ENCODE measurements at regions of chr6 and their contacts with region 1.

Region 1: GRCh38 chr6:34027445-34027936 is 118.4 kb downstream of the GRM4 start:
- DNase-seq: peak; percentile 82
- H3K4me3 Mint-ChIP-seq: no peak overlapping the region
- H3K27ac Mint-ChIP-seq: no peak overlapping the region
- H3K4me1 Mint-ChIP-seq: peaks cover under 1% of the 10 kb centered on the region
- H3K27me3 Mint-ChIP-seq: peaks cover 79% of the 10 kb centered on the region
- CTCF ChIP-seq: peak; percentile 97

Region 2: GRCh38 chr6:33851959-33852358 is 175.5 kb before region 1 on chr6:
- CTCF ChIA-PET with region 1: no interaction called
- intact Hi-C with region 1: loop called (anchors 5 kb)
- DNase-seq: peak; percentile 51
- H3K4me3 Mint-ChIP-seq: no peak overlapping the region
- H3K27ac Mint-ChIP-seq: no peak overlapping the region
- H3K4me1 Mint-ChIP-seq: no peaks in the 10 kb centered on the region
- H3K27me3 Mint-ChIP-seq: peaks cover 100% of the 10 kb centered on the region
- CTCF ChIP-seq: no peak